PC-9 (cell line): ENCODE measurements at regions of chr6 and their contacts with region 1.

Region 1: DNA sequence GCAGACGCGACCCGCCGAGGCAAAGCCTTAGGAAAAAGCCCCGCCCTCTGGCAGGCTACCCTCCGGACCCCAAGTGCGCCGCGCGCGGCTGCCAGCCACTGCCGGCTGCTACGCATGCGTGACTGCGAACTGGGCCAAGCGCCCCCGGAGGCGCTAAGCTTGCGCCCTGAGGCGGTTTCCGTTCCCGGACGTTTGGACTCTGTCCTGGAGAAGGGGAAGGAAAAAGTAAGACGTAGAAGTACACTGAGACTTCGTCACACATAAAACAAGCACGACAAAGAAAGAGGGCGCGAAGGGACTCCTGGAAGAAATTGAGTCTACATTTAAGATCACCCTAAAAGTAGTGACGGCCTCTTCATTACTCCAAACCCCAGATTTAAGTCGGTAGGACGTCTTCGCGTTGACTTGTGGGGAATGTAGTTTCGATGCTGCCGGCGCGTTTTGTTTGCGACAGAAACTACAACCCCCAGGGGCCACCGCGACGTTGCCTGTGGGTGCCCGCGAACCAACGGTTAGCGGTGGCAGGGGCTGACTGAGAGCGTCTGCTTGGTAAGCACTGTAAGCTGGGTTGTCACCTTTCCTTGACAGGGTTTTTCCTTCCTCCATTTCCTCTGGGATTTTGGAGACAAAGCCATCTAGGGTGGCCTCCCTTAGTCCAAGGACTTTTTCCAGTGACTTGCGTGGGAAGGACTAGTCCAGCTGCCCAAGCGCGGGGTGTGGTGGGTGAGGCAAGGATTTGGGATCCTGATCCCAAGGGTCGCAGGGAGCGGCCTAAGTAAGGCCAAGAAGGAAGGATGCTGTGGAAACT is at the start of gene CEP57L1:
- DNase-seq: peak; percentile 90 to 94
- H3K4me3 ChIP-seq: peak within 1 kb of the TSS; percentile 80
- H3K27ac ChIP-seq: peak within 1 kb of the TSS; percentile 90
- H3K4me1 ChIP-seq: peaks cover 36% of the 10 kb centered on the region
- H3K27me3 ChIP-seq: no peaks in the 10 kb centered on the region
- CTCF ChIP-seq: no peak
- total RNA-seq, gene CEP57L1: 17.2 and 18.3 TPM in 2 replicates

Region 2: GRCh38 chr6:108113557-108114519 is 981.4 kb before region 1 on chr6:
- CTCF ChIA-PET with region 1: no interaction called
- POLR2A ChIA-PET with region 1: interaction called, 12 read pairs
- intact Hi-C with region 1: no loop called
- DNase-seq: peak; percentile 23 to 59
- H3K4me3 ChIP-seq: 0 out of 2 replicates have a peak overlapping the region, but pooled peaks have one; percentile 8
- H3K27ac ChIP-seq: no peak overlapping the region
- H3K4me1 ChIP-seq: no peaks in the 10 kb centered on the region
- H3K27me3 ChIP-seq: peaks cover 5% of the 10 kb centered on the region; the same call in 1 of the 2 replicates
- CTCF ChIP-seq: peak; percentile 87

Region 3: DNA sequence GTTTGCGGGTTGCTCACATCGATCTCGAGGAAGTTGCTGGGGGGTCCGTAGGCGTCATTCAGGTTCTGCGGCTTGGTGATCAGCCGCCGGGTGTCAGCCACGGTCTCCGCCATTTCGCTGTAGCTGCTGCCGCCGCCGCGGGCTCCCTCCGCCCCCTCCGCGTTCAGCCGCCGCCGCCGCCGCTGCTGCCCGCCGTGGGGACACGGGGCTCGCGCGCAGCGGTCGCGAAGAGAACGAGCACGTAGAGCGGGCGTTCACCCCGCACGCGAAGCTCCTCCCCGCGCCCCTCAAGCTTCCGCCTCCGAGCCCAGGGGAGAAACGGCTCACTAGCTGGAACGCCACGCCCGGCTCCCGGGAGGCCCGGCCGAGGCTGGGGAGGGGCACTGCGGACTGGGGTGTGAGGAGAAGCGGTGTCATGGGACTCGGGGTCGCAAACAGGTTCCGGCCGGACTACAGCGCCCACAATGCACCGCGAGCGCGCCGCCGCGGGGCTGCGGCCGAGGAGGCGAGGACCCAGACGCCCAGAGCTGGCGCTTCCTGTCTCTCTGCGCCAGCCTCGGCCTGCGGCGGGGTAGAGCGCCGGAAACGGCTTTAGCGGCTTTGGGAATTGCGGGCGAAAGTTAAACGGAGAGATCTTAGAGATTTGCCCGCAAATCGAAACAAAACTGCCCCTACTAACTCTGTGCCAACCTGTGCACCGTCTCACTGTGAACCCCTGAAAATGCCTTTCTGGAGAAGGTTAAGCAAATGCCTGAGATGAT is 834.2 kb before region 1 on chr6 and contains the start of gene SNX3:
- CTCF ChIA-PET with region 1: no interaction called
- POLR2A ChIA-PET with region 1: no interaction called
- intact Hi-C with region 1: loop called (anchors 2 kb)
- DNase-seq: peak; percentile 90 to 97
- H3K4me3 ChIP-seq: peak within 1 kb of the TSS; percentile 70
- H3K27ac ChIP-seq: peak within 1 kb of the TSS; percentile 89
- H3K4me1 ChIP-seq: peaks cover 18% of the 10 kb centered on the region
- H3K27me3 ChIP-seq: no peaks in the 10 kb centered on the region
- CTCF ChIP-seq: no peak
- total RNA-seq, gene SNX3: 71.8 and 102 TPM in 2 replicates

Region 4: GRCh38 chr6:109172143-109172542 is 76.9 kb after region 1 on chr6:
- CTCF ChIA-PET with region 1: no interaction called
- POLR2A ChIA-PET with region 1: no interaction called
- intact Hi-C with region 1: loop called (anchors 2 kb)
- DNase-seq: peak; percentile 47 to 93
- H3K4me3 ChIP-seq: no peak overlapping the region
- H3K27ac ChIP-seq: 0 out of 2 replicates have a peak overlapping the region, but pooled peaks have one; percentile 3
- H3K4me1 ChIP-seq: peaks cover 18% of the 10 kb centered on the region
- H3K27me3 ChIP-seq: no peaks in the 10 kb centered on the region
- CTCF ChIP-seq: no peak

Region 5: GRCh38 chr6:109482905-109483735 is 387.9 kb after region 1 on chr6 and contains the start of gene ZBTB24:
- CTCF ChIA-PET with region 1: no interaction called
- POLR2A ChIA-PET with region 1: no interaction called
- intact Hi-C with region 1: loop called (anchors 10 kb)
- DNase-seq: peak; percentile 79 to 90
- H3K4me3 ChIP-seq: peak within 1 kb of the TSS; percentile 75
- H3K27ac ChIP-seq: peak within 1 kb of the TSS; percentile 10; the same call in 1 of the 2 replicates
- H3K4me1 ChIP-seq: peaks cover 53% of the 10 kb centered on the region
- H3K27me3 ChIP-seq: no peaks in the 10 kb centered on the region
- CTCF ChIP-seq: no peak
- total RNA-seq, gene ZBTB24: 5.4 and 7.2 TPM in 2 replicates

Region 6: GRCh38 chr6:109690737-109691621 is 595.7 kb after region 1 on chr6 and contains the starts of genes AK9 and FIG4:
- CTCF ChIA-PET with region 1: no interaction called
- POLR2A ChIA-PET with region 1: no interaction called
- intact Hi-C with region 1: loop called (anchors 10 kb)
- DNase-seq: peak; percentile 94
- H3K4me3 ChIP-seq: peak within 1 kb of the TSS; percentile 92
- H3K27ac ChIP-seq: peak within 1 kb of the TSS; percentile 74
- H3K4me1 ChIP-seq: peaks cover 39% of the 10 kb centered on the region
- H3K27me3 ChIP-seq: no peaks in the 10 kb centered on the region
- CTCF ChIP-seq: no peak; the same call in 1 of the 2 replicates
- total RNA-seq, gene AK9: 6.4 and 7.4 TPM in 2 replicates
- total RNA-seq, gene FIG4: 15.4 and 16.5 TPM in 2 replicates

Region 7: DNA sequence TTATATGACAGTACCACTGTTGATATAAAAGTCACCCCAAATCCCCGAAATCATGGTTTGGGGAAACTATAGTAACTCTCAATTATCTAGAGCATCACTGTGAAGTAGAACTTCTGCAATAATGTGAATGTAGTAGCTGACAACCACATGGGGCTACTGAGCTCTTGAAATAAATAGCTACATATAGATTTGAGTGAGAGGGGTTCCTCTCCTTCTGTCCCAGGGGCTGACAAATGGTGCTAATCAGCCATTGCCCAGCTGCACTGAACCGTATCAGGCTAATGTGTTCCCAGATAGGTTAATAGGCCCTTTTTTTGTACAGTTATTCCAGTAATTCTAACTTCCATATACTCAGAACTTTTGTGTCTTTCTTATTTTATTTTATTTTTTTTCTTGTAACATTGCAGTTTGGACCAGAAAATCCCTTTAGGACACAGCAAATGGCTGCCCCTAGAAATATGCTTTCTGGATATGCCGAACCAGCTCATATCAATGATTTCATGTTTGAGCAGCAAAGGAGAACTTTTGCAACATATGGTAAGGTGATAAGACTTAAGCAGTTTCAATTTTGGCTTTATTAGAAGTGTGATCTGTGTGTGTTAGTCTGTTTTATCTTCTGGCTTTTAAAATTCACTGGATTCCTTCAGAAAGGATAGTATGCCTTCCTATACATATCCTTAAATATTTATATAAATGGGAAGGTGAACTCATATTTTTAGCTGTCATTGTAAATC is 1106.1 kb after region 1 on chr6:
- CTCF ChIA-PET with region 1: no interaction called
- POLR2A ChIA-PET with region 1: interaction called, 10 read pairs
- intact Hi-C with region 1: no loop called
- DNase-seq: no peak
- H3K4me3 ChIP-seq: no peak overlapping the region
- H3K27ac ChIP-seq: no peak overlapping the region
- H3K4me1 ChIP-seq: no peaks in the 10 kb centered on the region
- H3K27me3 ChIP-seq: no peaks in the 10 kb centered on the region
- CTCF ChIP-seq: no peak